A549 (cell line): ENCODE measurements at regions of chr6 and their contacts with region 1.

Region 1: GRCh38 chr6:42532038-42532669 is 31.7 kb upstream of the UBR2 start:
- DNase-seq: peak; percentile 54 to 77
- ATAC-seq: peak; percentile 87 to 89
- H3K4me3 ChIP-seq: no peak overlapping the region
- H3K27ac ChIP-seq: no peak overlapping the region
- H3K4me1 ChIP-seq: no peaks in the 10 kb centered on the region
- CTCF ChIP-seq: peak; percentile 69
- EP300 ChIP-seq: no peak
- POLR2A ChIP-seq: no peak
- RAD21 ChIP-seq: peak; percentile 58 to 72

Region 2: GRCh38 chr6:42260972-42261371 is 271.2 kb before region 1 on chr6:
- CTCF ChIA-PET with region 1: interaction called, 12 read pairs
- POLR2A ChIA-PET with region 1: no interaction called
- DNase-seq: peak in 1 of 2 experiments; percentile 52
- ATAC-seq: peak; percentile 80 to 90; a peak in 4 of 6 replicates
- H3K4me3 ChIP-seq: no peak overlapping the region
- H3K27ac ChIP-seq: peak overlapping the region; percentile 43 to 72; a peak in 5 of 6 replicates
- H3K4me1 ChIP-seq: peaks cover 11% of the 10 kb centered on the region
- CTCF ChIP-seq: peak; percentile 61
- EP300 ChIP-seq: no peak
- POLR2A ChIP-seq: no peak
- RAD21 ChIP-seq: peak; percentile 61 to 74

Region 3: DNA sequence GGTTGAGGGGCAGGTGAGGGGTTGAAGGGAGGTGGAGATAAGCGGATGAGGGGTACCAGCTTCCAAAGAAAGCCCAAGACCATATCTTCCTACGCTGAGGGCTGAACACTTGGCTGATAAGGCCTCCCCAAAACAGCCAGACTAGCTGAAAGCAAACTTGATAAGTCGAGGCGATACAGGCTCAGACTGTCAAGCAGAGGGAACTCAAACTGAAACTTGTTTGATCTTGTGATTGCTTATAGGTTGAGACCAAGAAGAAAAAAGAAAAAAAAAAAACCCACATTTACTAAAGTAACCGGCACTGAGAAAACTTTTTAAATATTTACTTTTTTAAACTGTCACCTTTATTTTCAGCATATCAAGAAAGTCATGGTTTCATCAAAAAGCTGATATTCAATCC is 154.0 kb before region 1 on chr6:
- CTCF ChIA-PET with region 1: no interaction called
- POLR2A ChIA-PET with region 1: no interaction called
- DNase-seq: no peak
- ATAC-seq: no peak
- H3K4me3 ChIP-seq: no peak overlapping the region
- H3K27ac ChIP-seq: no peak overlapping the region
- H3K4me1 ChIP-seq: no peaks in the 10 kb centered on the region
- CTCF ChIP-seq: no peak
- EP300 ChIP-seq: no peak
- POLR2A ChIP-seq: no peak
- RAD21 ChIP-seq: no peak

Region 4: DNA sequence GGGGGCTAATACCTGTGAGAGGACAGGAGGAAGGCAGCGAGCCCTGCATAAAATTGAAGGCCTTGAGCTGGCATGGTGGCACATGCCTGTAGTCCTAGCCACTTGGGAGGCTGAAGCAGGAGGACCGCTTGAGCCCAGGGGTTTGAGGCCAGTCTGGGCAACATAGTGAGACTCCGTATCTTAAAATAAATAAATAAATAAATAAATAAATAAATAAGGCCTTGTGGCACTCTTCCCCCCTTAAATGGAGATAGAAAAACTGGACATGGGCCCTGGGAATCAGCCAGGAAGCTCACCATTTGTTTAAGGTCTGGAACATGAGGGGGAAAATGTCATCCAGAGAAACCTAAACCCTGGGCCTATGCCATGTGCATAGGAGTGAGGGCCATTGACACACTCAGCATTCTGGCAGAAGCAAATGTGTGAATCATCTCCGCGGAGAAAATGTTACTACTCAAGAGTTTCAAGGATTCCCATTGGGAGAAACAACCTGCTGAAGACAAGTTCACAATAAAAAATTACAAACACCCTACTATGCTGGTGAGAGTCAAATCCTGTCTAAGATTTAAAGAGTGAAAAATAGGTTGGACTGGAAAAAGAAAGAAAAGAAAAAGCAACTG is 20.2 kb before region 1 on chr6:
- CTCF ChIA-PET with region 1: interaction called, 13 read pairs
- POLR2A ChIA-PET with region 1: no interaction called
- DNase-seq: no peak
- ATAC-seq: no peak
- H3K4me3 ChIP-seq: no peak overlapping the region
- H3K27ac ChIP-seq: no peak overlapping the region
- H3K4me1 ChIP-seq: peaks cover 9% of the 10 kb centered on the region; the same call in 2 of the 3 replicates
- CTCF ChIP-seq: no peak
- EP300 ChIP-seq: no peak
- POLR2A ChIP-seq: no peak
- RAD21 ChIP-seq: no peak

Region 5: GRCh38 chr6:42520786-42521607 is 11.2 kb before region 1 on chr6:
- CTCF ChIA-PET with region 1: interaction called, 11 read pairs
- POLR2A ChIA-PET with region 1: no interaction called
- DNase-seq: peak in 1 of 2 experiments; percentile 21
- ATAC-seq: peak; percentile 71 to 72
- H3K4me3 ChIP-seq: no peak overlapping the region
- H3K27ac ChIP-seq: peak overlapping the region; percentile 22 to 69; a peak in 4 of 6 replicates
- H3K4me1 ChIP-seq: peaks cover 6% of the 10 kb centered on the region; the same call in 2 of the 3 replicates
- CTCF ChIP-seq: no peak
- EP300 ChIP-seq: no peak
- POLR2A ChIP-seq: no peak
- RAD21 ChIP-seq: no peak